CD4-positive, alpha-beta T cell (primary cell): ENCODE measurements at regions of chr9 and their contacts with region 1.

Region 1: GRCh38 chr9:19174127-19174912 is 47.0 kb upstream of the PLIN2 start:
- DNase-seq: peak in 9 of 14 experiments; percentile 3 to 78 (median 16)
- ATAC-seq: peak; percentile 58
- H3K4me3 ChIP-seq: no peak overlapping the region
- H3K4me3 Mint-ChIP-seq: no peak overlapping the region
- H3K27ac ChIP-seq: no peak overlapping the region
- H3K27ac Mint-ChIP-seq: peak overlapping the region; percentile 21
- H3K4me1 ChIP-seq: peaks cover 22% of the 10 kb centered on the region
- H3K4me1 Mint-ChIP-seq: peaks cover 31% of the 10 kb centered on the region
- H3K27me3 ChIP-seq: no peaks in the 10 kb centered on the region
- H3K27me3 Mint-ChIP-seq: no peaks in the 10 kb centered on the region
- CTCF ChIP-seq: peak; percentile 89

Region 2: DNA sequence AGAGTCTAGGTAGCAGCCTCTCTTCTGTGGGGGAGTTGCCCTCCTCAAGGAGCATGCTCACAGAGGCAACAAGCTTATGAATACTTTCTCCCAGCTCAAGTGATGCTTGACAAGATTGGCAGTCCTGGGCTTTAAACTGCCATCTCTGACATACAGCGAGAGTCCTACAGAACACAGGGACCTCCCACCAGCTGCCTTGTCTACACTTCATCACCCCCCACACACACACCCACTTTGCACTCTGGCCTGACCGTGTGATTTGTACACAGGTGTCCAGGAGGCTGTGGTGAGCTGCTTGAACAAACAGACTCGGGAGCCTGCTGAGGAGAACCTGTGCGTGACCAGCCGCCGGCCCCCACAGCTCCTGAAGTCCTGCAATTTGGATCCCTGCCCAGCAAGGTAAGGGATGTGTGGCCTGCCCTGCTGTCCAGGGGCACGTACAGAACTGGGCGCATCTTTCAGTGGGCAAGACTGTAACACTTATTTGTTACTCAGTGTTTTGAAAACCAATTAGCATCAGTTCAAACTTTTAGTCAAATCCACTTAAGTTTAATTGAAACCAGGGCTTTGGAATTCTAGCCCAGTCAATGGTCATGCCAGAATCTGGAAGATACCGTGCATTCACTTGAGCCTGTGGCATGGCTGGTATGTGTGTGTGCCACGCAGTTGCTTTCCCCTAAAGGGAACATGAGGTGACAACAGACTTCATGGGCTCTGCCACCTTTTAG is 452.9 kb before region 1 on chr9:
- CTCF ChIA-PET with region 1: no interaction called
- POLR2A ChIA-PET with region 1: no interaction called
- intact Hi-C with region 1: no loop called
- DNase-seq: no peak
- ATAC-seq: no peak
- H3K4me3 ChIP-seq: no peak overlapping the region
- H3K4me3 Mint-ChIP-seq: no peak overlapping the region
- H3K27ac ChIP-seq: no peak overlapping the region
- H3K27ac Mint-ChIP-seq: no peak overlapping the region
- H3K4me1 ChIP-seq: no peaks in the 10 kb centered on the region
- H3K4me1 Mint-ChIP-seq: no peaks in the 10 kb centered on the region
- H3K27me3 ChIP-seq: no peaks in the 10 kb centered on the region
- H3K27me3 Mint-ChIP-seq: no peaks in the 10 kb centered on the region
- CTCF ChIP-seq: no peak

Region 3: DNA sequence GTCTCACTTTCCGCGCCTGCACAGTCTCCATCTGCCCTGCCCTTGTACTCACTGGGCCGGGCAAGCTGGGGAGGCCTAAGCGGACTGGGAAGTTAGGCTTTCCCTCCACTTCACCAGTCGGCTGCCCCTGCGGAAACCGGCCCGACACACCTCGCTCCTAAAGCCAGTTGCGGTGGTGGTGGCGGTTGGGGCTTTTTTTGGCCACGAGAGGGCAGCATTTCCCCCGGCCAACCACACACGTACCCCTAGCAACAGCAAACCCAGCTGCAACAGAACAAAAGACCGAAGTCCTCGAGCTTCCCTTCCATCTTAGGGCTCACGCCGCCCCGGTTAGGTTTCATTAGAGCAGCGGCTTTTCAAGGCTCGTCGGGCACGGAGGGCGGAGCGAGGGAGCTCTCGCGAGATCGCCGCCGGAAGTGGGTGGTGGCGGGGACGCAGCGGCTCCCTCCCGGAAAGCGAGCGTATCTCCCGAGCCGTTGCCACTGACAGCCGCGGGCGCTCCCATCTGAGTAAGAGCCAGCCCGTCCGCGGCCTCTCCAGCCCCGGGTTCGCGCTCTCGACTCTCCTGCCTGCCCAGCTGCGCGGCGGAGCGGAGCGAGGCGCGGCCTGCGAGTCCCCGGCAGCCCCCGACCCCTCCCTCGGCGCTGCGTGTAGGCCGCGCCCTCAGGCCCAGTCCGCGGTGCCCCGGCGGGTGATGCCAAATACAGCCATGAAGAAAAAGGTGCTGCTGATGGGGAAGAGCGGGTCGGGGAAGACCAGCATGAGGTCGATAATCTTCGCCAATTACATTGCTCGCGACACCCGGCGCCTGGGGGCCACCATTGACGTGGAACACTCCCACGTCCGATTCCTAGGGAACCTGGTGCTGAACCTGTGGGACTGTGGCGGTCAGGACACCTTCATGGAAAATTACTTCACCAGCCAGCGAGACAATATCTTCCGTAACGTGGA is 125.1 kb before region 1 on chr9 and contains the start of gene RRAGA:
- CTCF ChIA-PET with region 1: interaction called, 18 read pairs
- POLR2A ChIA-PET with region 1: interaction called, 8 read pairs
- intact Hi-C with region 1: loop called in 1 of 2 experiments (anchors 2 kb)
- DNase-seq: peak; percentile 89 to 97 (median 93)
- ATAC-seq: peak; percentile 90
- H3K4me3 ChIP-seq: peak within 1 kb of the TSS; percentile 94
- H3K4me3 Mint-ChIP-seq: peak within 1 kb of the TSS; percentile 97
- H3K27ac ChIP-seq: peak within 1 kb of the TSS; percentile 86 to 93
- H3K27ac Mint-ChIP-seq: peak within 1 kb of the TSS; percentile 99
- H3K4me1 ChIP-seq: peaks cover 27% of the 10 kb centered on the region
- H3K4me1 Mint-ChIP-seq: peaks cover 50% of the 10 kb centered on the region
- H3K27me3 ChIP-seq: no peaks in the 10 kb centered on the region
- H3K27me3 Mint-ChIP-seq: no peaks in the 10 kb centered on the region
- CTCF ChIP-seq: peak; percentile 78
- total RNA-seq, gene RRAGA: 34.4 to 34.7 TPM

Region 4: DNA sequence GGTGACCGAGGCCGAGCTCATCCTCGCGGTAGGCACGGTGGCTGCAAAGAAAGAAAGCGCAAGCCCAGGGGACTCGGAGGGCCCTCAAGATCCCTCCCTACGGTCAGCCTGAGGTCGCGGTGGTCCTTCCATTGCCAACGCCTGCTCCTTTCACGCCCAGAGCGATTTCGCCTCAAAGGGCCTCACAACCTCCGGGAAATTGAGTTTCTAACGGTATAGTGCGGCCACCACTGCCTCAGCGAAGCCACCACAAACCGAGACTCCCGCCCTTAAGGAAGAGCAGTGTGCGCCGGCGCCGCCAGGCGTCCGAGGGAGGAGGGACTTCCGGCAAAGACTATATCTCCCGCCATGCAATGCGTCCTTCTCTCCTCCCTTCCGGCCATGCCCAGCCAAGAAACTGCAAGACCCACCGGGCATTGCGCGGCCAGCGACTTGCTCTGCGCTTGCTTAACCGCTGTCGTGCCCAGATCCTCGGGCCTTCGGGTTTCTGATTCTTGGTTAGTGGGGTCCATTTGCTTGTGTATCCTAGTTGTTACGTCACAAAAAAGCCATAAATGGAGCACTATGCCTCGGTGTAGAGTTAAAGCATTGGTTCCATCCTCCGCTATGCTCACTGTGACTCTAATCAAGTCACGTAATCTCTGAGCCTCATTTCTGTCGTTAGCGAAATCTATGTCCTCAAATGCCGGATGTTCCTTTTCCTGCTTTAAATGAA is 71.5 kb before region 1 on chr9 and contains the start of gene HAUS6:
- CTCF ChIA-PET with region 1: no interaction called
- POLR2A ChIA-PET with region 1: no interaction called
- intact Hi-C with region 1: loop called (anchors 5 kb)
- DNase-seq: peak; percentile 81 to 99 (median 92)
- ATAC-seq: peak; percentile 89
- H3K4me3 ChIP-seq: peak within 1 kb of the TSS; percentile 85
- H3K4me3 Mint-ChIP-seq: peak within 1 kb of the TSS; percentile 99
- H3K27ac ChIP-seq: peak within 1 kb of the TSS; percentile 81 to 85
- H3K27ac Mint-ChIP-seq: peak within 1 kb of the TSS; percentile 98
- H3K4me1 ChIP-seq: peaks cover 20% of the 10 kb centered on the region
- H3K4me1 Mint-ChIP-seq: peaks cover 31% of the 10 kb centered on the region
- H3K27me3 ChIP-seq: no peaks in the 10 kb centered on the region
- H3K27me3 Mint-ChIP-seq: no peaks in the 10 kb centered on the region
- CTCF ChIP-seq: peak; percentile 35
- total RNA-seq, gene HAUS6: 14.9 to 17.2 TPM

Region 5: DNA sequence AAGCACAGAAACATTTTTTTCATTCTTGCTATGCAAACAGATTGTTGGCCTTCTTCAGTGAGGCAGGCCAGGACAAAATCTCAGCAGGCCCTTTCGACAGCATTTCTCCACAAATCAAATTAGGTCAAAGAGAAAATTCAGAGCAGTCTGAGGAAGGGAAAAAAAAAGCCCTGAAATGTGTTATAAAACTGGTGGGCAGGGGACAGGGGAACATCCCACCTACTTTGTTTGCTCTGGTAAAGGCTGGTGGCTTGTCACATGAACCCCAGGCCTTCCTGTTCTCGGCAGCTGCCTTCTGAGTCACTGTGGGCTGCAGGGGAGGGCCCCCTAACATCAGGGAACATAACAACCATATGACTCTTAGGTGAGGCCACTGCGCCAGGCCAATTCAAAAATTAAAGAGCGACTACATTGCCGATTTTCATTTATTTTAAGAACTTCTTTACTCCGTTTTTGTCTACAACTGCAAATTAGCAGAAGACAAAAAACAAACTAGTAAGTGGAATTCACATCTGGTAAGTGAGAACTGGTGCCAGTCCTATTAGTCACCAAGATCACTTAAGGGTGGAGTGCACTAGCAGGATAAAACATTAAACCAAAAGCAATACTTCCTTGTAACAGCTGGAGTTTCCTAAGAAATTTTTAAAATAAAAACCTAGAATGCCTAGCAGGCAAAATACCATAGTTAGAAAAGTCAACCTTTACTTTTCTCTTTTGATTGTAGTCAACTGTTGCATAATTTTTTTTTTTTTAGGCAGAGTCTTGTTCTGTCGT is 10.0 kb after region 1 on chr9:
- CTCF ChIA-PET with region 1: interaction called, 11 read pairs
- POLR2A ChIA-PET with region 1: interaction called, 10 read pairs
- intact Hi-C with region 1: no loop called
- DNase-seq: peak; percentile 43 to 90 (median 71)
- ATAC-seq: peak; percentile 99
- H3K4me3 ChIP-seq: no peak overlapping the region
- H3K4me3 Mint-ChIP-seq: peak overlapping the region; percentile 44
- H3K27ac ChIP-seq: peak overlapping the region; percentile 32 to 60
- H3K27ac Mint-ChIP-seq: peak overlapping the region; percentile 92
- H3K4me1 ChIP-seq: peaks cover 26% of the 10 kb centered on the region
- H3K4me1 Mint-ChIP-seq: peaks cover 13% of the 10 kb centered on the region
- H3K27me3 ChIP-seq: no peaks in the 10 kb centered on the region
- H3K27me3 Mint-ChIP-seq: no peaks in the 10 kb centered on the region
- CTCF ChIP-seq: no peak

Region 6: DNA sequence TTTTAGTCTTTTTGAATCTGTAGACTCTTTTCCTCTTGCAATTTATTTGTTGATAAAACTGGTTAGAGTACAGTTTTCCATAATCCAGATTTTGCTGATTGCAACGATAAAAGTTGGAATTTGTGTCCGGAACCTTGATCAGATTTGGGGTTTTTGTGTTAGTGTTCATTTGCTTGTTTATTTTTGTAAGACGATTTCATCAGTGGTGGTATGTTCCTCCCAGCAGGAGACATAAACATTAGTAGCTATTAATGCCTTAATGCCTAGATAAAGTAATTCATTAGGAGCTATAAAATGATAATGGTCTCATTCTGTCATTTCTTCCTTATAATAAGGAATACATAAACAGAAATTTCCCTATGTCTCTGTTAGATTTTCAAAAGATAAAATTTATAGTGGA is 184.4 kb after region 1 on chr9:
- CTCF ChIA-PET with region 1: no interaction called
- POLR2A ChIA-PET with region 1: no interaction called
- intact Hi-C with region 1: no loop called
- DNase-seq: no peak
- ATAC-seq: no peak
- H3K4me3 ChIP-seq: no peak overlapping the region
- H3K4me3 Mint-ChIP-seq: no peak overlapping the region
- H3K27ac ChIP-seq: no peak overlapping the region
- H3K27ac Mint-ChIP-seq: no peak overlapping the region
- H3K4me1 ChIP-seq: no peaks in the 10 kb centered on the region
- H3K4me1 Mint-ChIP-seq: no peaks in the 10 kb centered on the region
- H3K27me3 ChIP-seq: no peaks in the 10 kb centered on the region
- H3K27me3 Mint-ChIP-seq: no peaks in the 10 kb centered on the region
- CTCF ChIP-seq: no peak